Endothelial cell of umbilical vein (primary cell): ENCODE measurements at regions of chr19 and their contacts with region 1.

Region 1: DNA sequence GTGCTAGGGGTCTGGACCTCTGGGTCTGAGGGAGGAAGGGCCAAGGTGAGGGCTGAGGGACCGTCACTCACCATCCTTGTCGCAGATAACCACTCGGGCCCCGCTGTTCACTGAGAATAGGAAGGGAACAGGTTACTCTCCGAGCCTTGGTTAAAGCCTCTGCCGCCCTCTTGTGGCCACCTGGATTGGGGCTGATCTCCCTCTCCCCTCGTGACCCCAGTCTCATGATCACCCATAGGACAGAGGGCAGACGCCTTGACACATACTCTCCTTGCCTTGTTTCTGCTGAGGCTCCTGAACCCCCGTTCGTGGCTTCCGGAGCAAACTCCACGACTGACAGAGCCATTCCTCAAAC is 580 bp downstream of the HSD17B14 start:
- DNase-seq: peak; percentile 87
- H3K4me3 ChIP-seq: peak overlapping the region; percentile 38 to 61 (median 57)
- H3K27ac ChIP-seq: peak overlapping the region; percentile 52
- H3K4me1 ChIP-seq: peaks cover 5% of the 10 kb centered on the region
- H3K27me3 ChIP-seq: no peaks in the 10 kb centered on the region
- CTCF ChIP-seq: peak; percentile 88 to 92
- POLR2A ChIP-seq: no peak

Region 2: DNA sequence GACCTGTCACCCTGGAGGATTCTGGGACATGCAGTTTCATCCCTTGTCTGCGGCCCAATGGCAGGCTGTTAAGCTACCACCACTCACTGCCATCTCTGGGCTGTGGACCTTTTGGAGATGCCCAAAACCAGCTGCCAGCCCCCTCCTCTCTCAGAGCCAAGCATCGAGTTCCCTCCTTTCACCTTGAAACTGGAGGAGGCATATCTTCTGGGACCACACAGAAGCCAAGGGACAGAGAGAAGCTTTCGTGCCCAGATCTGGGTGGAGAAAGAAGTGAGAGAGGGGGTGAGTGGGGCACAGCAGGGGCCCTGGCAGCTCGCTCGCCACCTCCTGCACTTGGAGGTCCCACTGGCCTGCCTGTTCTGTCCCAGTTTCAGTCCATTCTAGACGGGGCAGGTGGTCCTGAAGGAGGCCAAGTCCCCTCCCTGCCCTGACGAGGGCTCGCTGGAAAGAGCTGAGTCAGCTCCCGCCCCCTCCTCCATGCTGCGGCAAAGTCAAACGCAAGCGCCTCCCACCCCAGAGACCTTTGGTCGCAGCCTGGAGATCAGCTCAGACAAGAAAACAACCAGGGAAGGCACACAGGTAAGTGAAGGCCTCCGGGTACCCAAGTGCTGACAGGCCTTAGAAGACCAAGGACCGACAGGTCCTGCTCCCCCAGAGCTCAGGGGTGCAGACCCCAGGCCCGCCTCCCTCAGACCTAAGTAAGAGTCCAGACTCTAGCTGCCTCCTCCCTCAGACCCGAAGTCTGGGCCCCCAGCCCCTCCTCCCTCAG is 28.7 kb before region 1 on chr19:
- CTCF ChIA-PET with region 1: interaction called, 10 read pairs
- POLR2A ChIA-PET with region 1: no interaction called
- dilution Hi-C with region 1: no loop called
- intact Hi-C with region 1: loop called (anchors 1 kb)
- DNase-seq: no peak
- H3K4me3 ChIP-seq: no peak overlapping the region
- H3K27ac ChIP-seq: no peak overlapping the region
- H3K4me1 ChIP-seq: peaks cover 7% of the 10 kb centered on the region
- H3K27me3 ChIP-seq: no peaks in the 10 kb centered on the region
- CTCF ChIP-seq: no peak
- POLR2A ChIP-seq: no peak

Region 3: DNA sequence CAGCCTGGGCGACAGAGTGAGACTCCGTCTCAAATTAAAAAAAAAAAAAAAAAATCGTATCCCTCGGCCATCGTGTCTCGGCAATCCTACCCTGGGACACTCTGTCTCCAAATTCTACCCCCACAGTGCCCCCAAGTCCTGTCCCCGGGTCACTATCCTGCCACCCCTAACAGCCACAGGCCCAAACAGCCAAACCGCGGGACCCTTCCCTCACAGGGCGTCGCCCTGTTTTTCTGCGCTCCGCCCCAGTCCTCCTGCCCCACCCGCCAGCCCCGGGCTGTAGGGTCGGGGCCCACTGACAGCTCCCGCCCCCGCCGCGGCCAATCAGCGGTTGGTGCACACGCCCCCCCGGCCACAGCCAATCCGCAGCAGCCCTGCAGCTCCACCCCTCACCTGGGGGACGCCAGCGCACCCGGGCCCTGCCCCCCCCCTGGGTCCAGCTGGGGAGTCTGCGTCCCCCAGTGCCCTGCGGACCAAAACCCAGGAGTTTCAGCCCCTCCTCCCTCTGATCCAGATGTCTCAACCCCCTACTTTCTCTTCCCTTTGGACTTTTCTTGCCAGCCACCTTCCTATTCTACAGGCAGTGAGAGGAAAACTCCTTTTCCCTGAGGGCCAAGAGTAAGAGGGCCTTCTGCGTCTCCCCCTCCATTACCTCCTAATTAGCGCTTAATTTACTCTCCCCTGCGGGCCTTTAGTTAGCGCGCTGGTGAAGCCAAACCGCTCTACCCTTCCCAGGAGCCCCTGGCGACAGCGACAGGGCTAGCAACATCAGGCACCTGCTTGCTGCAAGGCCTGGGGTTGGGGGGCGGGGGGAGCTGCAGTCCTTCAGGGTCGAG is 23.4 kb before region 1 on chr19:
- CTCF ChIA-PET with region 1: interaction called, 10 read pairs
- POLR2A ChIA-PET with region 1: no interaction called
- dilution Hi-C with region 1: no loop called
- intact Hi-C with region 1: loop called (anchors 1 kb)
- DNase-seq: peak; percentile 72
- H3K4me3 ChIP-seq: peak overlapping the region; percentile 12 to 29 (median 20)
- H3K27ac ChIP-seq: no peak overlapping the region
- H3K4me1 ChIP-seq: peaks cover 13% of the 10 kb centered on the region
- H3K27me3 ChIP-seq: no peaks in the 10 kb centered on the region
- CTCF ChIP-seq: no peak
- POLR2A ChIP-seq: peak; percentile 49